Dorsolateral prefrontal cortex (tissue), 120 donors: ENCODE measurements at regions of chr17 and their contacts with region 1.

Region 1: GRCh38 chr17:8479431-8479947 is 43.8 kb downstream of the NDEL1 start:
- DNase-seq: peak; percentile 62 to 84 (median 76)
- H3K4me3 ChIP-seq: peak overlapping the region in 22 of 59 donors; percentile 0 to 50 (median 16)
- H3K27ac ChIP-seq: peak overlapping the region in 57 of 59 donors; percentile 3 to 81 (median 67)
- H3K27me3 ChIP-seq: no peaks in the 10 kb centered on the region
- CTCF ChIP-seq: peak in 12 of 56 donors; percentile 6 to 35 (median 12)

Region 2: DNA sequence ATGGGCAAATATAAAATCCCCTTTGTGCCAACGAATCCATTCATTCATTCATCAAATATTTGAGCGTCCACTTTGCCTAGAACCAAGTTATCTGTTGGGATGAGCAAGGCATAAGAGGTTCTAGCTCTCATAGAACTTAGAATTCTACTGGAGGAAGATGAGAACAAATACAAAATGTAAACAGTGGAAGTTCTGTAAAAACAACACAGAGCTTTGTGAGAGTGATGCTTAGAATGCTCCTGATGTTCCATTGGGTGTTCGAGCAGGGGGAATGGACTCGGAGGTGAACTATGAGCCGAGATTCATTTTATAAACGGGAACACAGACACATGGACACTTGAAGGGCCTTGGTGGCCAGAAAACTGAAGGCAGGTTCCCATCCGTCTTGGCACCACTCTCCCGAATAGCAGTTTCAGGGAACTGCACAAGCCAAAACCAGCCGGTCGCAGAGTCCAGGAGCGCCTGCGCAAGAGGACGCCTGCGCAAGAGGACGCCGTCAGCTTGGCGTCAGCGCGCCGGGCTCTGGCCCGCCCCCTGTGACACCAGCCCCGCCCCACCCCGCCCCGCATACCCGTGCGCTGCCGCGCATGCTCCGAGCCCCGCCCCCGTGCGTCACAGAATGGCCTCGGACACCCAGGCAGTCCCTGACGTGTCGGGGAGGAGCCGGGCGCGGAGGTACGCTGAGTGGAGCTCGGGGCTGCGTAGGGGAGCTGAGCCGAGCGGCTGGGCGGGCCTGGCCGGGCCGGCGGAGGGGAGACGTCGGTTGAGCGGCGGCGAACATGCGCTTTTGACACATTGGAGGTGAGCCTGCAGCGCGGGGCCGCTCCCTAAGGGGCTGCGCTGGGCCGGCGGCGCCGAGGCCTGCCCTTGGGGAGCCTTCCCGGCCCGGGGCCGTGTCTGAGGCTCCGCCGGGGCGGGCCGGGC is 44.0 kb before region 1 on chr17 and contains the start of gene NDEL1:
- intact Hi-C with region 1: loop called in 1 of 2 experiments (anchors 2 kb)
- DNase-seq: peak; percentile 96 to 100 (median 99)
- H3K4me3 ChIP-seq: peak within 1 kb of the TSS; percentile 72 to 100 (median 96)
- H3K27ac ChIP-seq: peak within 1 kb of the TSS; percentile 83 to 100 (median 96)
- H3K27me3 ChIP-seq: no peaks in the 10 kb centered on the region
- CTCF ChIP-seq: peak in 31 of 56 donors; percentile 2 to 56 (median 30)
- total RNA-seq, gene NDEL1: 51.0 to 118 (median 91.4) TPM

Region 3: GRCh38 chr17:8727065-8727511 is 247.6 kb after region 1 on chr17:
- intact Hi-C with region 1: no loop called
- DNase-seq: no peak
- H3K4me3 ChIP-seq: no peak overlapping the region
- H3K27ac ChIP-seq: no peak overlapping the region
- H3K27me3 ChIP-seq: no peaks in the 10 kb centered on the region
- CTCF ChIP-seq: no peak